ENCODE measurements at regions of chr18 and their contacts with region 1.

Region 1: GRCh38 chr18:70288851-70289328 is at the start of gene SOCS6:
- DNase-seq: no peak
- H3K4me3 ChIP-seq: peak within 1 kb of the TSS; percentile 83 to 97 (median 86)
- H3K27ac ChIP-seq: peak within 1 kb of the TSS; percentile 88 to 90 (median 90)
- H3K4me1 ChIP-seq: peaks cover 33 to 51% (median 40%) of the 10 kb centered on the region in 4 donors
- H3K27me3 ChIP-seq: no peaks in the 10 kb centered on the region
- CTCF ChIP-seq: no peak
- EP300 ChIP-seq: no peak
- POLR2A ChIP-seq: no peak
- total RNA-seq, gene SOCS6: 14.1 to 22.3 (median 19.4) TPM

Region 2: GRCh38 chr18:70082430-70082829 is 206.5 kb before region 1 on chr18:
- intact Hi-C with region 1: no loop called
- DNase-seq: no peak
- H3K4me3 ChIP-seq: no peak overlapping the region
- H3K27ac ChIP-seq: no peak overlapping the region
- H3K4me1 ChIP-seq: no peaks in the 10 kb centered on the region
- H3K27me3 ChIP-seq: no peaks in the 10 kb centered on the region
- CTCF ChIP-seq: no peak
- EP300 ChIP-seq: no peak
- POLR2A ChIP-seq: no peak

Region 3: GRCh38 chr18:70205421-70206397 is 83.2 kb before region 1 on chr18 and contains the start of gene RTTN:
- intact Hi-C with region 1: loop called (anchors 2 kb)
- DNase-seq: peak; percentile 96
- H3K4me3 ChIP-seq: peak within 1 kb of the TSS; percentile 66 to 89 (median 70)
- H3K27ac ChIP-seq: peak within 1 kb of the TSS; percentile 90 to 93 (median 92)
- H3K4me1 ChIP-seq: peaks cover 7 to 22% (median 17%) of the 10 kb centered on the region in 4 donors
- H3K27me3 ChIP-seq: no peaks in the 10 kb centered on the region
- CTCF ChIP-seq: no peak
- EP300 ChIP-seq: no peak
- POLR2A ChIP-seq: no peak
- total RNA-seq, gene RTTN: 6.7 to 18.7 (median 7.3) TPM

Region 4: GRCh38 chr18:70221156-70221914 is 67.6 kb before region 1 on chr18:
- intact Hi-C with region 1: no loop called
- DNase-seq: no peak
- H3K4me3 ChIP-seq: no peak overlapping the region
- H3K27ac ChIP-seq: no peak overlapping the region
- H3K4me1 ChIP-seq: no peaks in the 10 kb centered on the region
- H3K27me3 ChIP-seq: no peaks in the 10 kb centered on the region
- CTCF ChIP-seq: no peak
- EP300 ChIP-seq: no peak
- POLR2A ChIP-seq: no peak

Region 5: GRCh38 chr18:70431203-70431624 is 142.3 kb after region 1 on chr18:
- intact Hi-C with region 1: loop called (anchors 5 kb)
- DNase-seq: no peak
- H3K4me3 ChIP-seq: no peak overlapping the region
- H3K27ac ChIP-seq: no peak overlapping the region
- H3K4me1 ChIP-seq: no peaks in the 10 kb centered on the region
- H3K27me3 ChIP-seq: no peaks in the 10 kb centered on the region
- CTCF ChIP-seq: no peak
- EP300 ChIP-seq: no peak
- POLR2A ChIP-seq: no peak

Measured in esophagus muscularis mucosa (tissue), 4 donors.